MCF 10A (cell line): ENCODE measurements at regions of chr1 and their contacts with region 1.

Region 1: GRCh38 chr1:86774305-86775295 is 70.2 kb downstream of the SH3GLB1 start:
- DNase-seq: peak; percentile 93
- H3K4me3 Mint-ChIP-seq: peak overlapping the region; percentile 64
- H3K27ac Mint-ChIP-seq: peak overlapping the region; percentile 89
- H3K4me1 Mint-ChIP-seq: peaks cover 48% of the 10 kb centered on the region
- H3K27me3 Mint-ChIP-seq: no peaks in the 10 kb centered on the region
- CTCF ChIP-seq: no peak

Region 2: DNA sequence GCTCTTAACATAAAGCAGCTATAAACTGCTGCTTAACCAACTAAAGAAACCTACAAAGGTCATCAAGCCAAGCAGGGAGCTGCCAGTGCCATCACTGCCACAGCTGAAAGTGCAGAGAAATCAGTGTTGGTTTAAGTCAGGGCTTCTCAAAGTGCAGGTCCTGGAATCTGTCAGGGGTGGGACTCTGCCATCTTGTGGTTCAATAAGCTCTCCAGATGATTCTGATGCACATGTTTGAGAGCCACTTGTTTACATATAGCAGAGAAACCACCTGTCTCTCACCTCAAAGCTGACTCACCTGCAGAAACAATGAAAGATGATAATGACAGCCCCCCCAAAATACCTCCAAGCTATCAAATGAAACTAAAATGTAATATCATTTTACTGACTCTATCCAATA is 20.9 kb before region 1 on chr1:
- CTCF ChIA-PET with region 1: interaction called, 4 read pairs
- POLR2A ChIA-PET with region 1: interaction called, 16 read pairs
- intact Hi-C with region 1: no loop called
- DNase-seq: peak; percentile 47
- H3K4me3 Mint-ChIP-seq: no peak overlapping the region
- H3K27ac Mint-ChIP-seq: no peak overlapping the region
- H3K4me1 Mint-ChIP-seq: no peaks in the 10 kb centered on the region
- H3K27me3 Mint-ChIP-seq: no peaks in the 10 kb centered on the region
- CTCF ChIP-seq: no peak

Region 3: GRCh38 chr1:86788300-86789206 is 14.0 kb after region 1 on chr1:
- CTCF ChIA-PET with region 1: interaction called, 3 read pairs
- POLR2A ChIA-PET with region 1: interaction called, 10 read pairs
- intact Hi-C with region 1: no loop called
- DNase-seq: peak; percentile 69
- H3K4me3 Mint-ChIP-seq: no peak overlapping the region
- H3K27ac Mint-ChIP-seq: peak overlapping the region; percentile 71
- H3K4me1 Mint-ChIP-seq: peaks cover 31% of the 10 kb centered on the region
- H3K27me3 Mint-ChIP-seq: no peaks in the 10 kb centered on the region
- CTCF ChIP-seq: no peak

Region 4: GRCh38 chr1:86965012-86965826 is 190.6 kb after region 1 on chr1:
- CTCF ChIA-PET with region 1: interaction called, 14 read pairs
- POLR2A ChIA-PET with region 1: no interaction called
- intact Hi-C with region 1: no loop called
- DNase-seq: peak; percentile 48
- H3K4me3 Mint-ChIP-seq: no peak overlapping the region
- H3K27ac Mint-ChIP-seq: no peak overlapping the region
- H3K4me1 Mint-ChIP-seq: no peaks in the 10 kb centered on the region
- H3K27me3 Mint-ChIP-seq: no peaks in the 10 kb centered on the region
- CTCF ChIP-seq: peak; percentile 74